Activated CD4-positive, alpha-beta T cell treated with anti-CD3 and anti-CD28 coated beads, Interleukin-2, amount 10 ng/mL, durations not matched to agents 7 days and 5 days (primary cell): ENCODE measurements at regions of chr3 and their contacts with region 1.

Region 1: DNA sequence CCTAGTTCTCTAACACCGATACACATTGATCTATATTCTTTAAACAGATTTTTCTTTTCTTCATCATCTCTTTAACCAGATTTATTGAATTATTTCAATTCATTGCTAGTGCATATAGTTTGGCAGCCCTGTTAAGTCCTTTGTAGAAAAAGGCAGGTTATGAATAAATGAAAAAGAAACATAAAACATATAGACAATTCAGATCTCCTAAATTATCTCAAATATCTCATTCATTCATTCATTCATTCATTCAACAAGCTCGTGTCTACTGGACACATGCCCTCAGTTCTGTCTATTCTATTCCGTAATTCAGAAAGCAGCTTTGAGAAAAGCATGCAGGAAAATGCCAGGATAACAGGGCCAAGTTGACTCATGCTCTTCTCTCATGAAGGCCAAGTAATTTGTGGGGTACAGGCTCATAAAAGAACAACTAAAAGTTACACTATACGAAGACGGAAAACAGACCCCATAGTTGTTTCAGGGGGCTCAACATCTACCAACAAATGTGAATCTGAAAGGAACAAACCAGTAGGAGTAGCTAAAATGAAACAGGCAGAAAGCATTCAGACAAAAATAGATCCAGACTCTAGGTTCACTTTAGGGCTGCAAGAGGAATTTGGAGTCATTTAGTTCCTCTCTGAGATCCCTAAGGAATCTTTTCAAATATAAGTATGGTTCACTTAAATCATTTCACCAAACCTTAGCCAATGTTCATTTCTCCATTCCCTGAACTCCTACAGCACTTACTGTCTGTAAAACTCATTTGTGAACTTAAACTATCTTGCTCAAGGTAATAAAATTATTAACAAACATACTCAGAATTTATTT is 7.5 kb downstream of the ZNF148 start:
- DNase-seq: no peak
- H3K4me3 Mint-ChIP-seq: no peak overlapping the region
- H3K27ac Mint-ChIP-seq: no peak overlapping the region
- H3K4me1 Mint-ChIP-seq: peaks cover 35% of the 10 kb centered on the region
- H3K27me3 Mint-ChIP-seq: no peaks in the 10 kb centered on the region

Region 2: DNA sequence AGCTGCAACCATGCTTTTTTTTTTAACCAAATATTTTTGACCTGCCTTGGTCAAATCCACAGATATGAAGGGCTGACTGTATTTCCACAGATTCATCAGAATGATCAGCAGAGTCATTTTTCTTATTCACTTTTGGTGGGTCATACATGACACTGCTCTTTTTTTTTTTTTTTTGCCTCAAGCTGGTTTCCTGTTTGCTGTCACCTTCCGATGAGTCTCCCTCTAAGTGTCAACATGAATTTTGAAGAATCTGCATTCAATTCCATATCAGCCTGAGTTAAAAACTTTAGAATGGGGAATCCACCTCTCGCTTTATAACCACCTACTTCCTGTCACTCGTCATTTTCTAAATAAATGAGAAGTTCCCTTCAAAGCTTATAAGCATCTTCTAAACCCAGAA is 152.9 kb before region 1 on chr3:
- CTCF ChIA-PET with region 1: no interaction called
- POLR2A ChIA-PET with region 1: interaction called, 11 read pairs
- DNase-seq: no peak
- H3K4me3 Mint-ChIP-seq: no peak overlapping the region
- H3K27ac Mint-ChIP-seq: no peak overlapping the region
- H3K4me1 Mint-ChIP-seq: peaks cover 13% of the 10 kb centered on the region
- H3K27me3 Mint-ChIP-seq: peaks cover 47% of the 10 kb centered on the region

Region 3: DNA sequence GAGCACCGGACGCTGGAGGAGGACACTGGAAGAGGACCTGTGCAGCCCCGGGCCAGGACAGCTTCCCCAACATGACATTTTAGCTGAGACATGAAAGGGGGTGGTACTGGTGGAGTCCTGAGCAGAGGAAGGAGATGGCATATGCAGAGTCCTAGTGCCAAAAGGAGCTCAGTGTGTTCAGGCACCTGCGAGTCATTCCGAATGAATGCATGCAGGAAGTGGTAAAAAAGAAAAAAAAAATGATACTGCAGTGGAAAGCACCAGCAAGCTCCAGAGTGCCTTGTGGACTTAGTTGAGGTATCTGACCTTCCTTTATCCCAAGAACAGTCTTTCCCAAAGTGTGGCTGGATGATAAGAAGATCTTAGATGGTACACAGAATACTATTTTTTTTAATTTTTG is 14.1 kb after region 1 on chr3:
- CTCF ChIA-PET with region 1: no interaction called
- POLR2A ChIA-PET with region 1: no interaction called
- DNase-seq: peak; percentile 37
- H3K4me3 Mint-ChIP-seq: no peak overlapping the region
- H3K27ac Mint-ChIP-seq: no peak overlapping the region
- H3K4me1 Mint-ChIP-seq: peaks cover 11% of the 10 kb centered on the region
- H3K27me3 Mint-ChIP-seq: peaks cover 4% of the 10 kb centered on the region